Activated CD4-positive, alpha-beta memory T cell treated with anti-CD3 and anti-CD28 coated beads for 36 hours (primary cell): ENCODE measurements at regions of chr15 and their contacts with region 1.

Region 1: GRCh38 chr15:93087825-93088199 is 1.2 kb downstream of the RGMA start:
- DNase-seq: peak; percentile 83
- H3K4me3 Mint-ChIP-seq: peak overlapping the region; percentile 67
- H3K27ac Mint-ChIP-seq: no peak overlapping the region
- H3K4me1 Mint-ChIP-seq: peaks cover 12% of the 10 kb centered on the region
- H3K27me3 Mint-ChIP-seq: peaks cover 54% of the 10 kb centered on the region

Region 2: GRCh38 chr15:93072411-93073394 is 15.1 kb before region 1 on chr15:
- CTCF ChIA-PET with region 1: interaction called, 12 read pairs
- POLR2A ChIA-PET with region 1: no interaction called
- intact Hi-C with region 1: no loop called
- DNase-seq: no peak
- H3K4me3 Mint-ChIP-seq: no peak overlapping the region
- H3K27ac Mint-ChIP-seq: no peak overlapping the region
- H3K4me1 Mint-ChIP-seq: peaks cover 10% of the 10 kb centered on the region
- H3K27me3 Mint-ChIP-seq: peaks cover 42% of the 10 kb centered on the region

Region 3: GRCh38 chr15:93124126-93124525 is 36.3 kb after region 1 on chr15:
- CTCF ChIA-PET with region 1: no interaction called
- POLR2A ChIA-PET with region 1: no interaction called
- intact Hi-C with region 1: no loop called
- DNase-seq: no peak
- H3K4me3 Mint-ChIP-seq: no peak overlapping the region
- H3K27ac Mint-ChIP-seq: no peak overlapping the region
- H3K4me1 Mint-ChIP-seq: peaks cover 3% of the 10 kb centered on the region
- H3K27me3 Mint-ChIP-seq: no peaks in the 10 kb centered on the region

Region 4: GRCh38 chr15:93180656-93181055 is 92.8 kb after region 1 on chr15:
- CTCF ChIA-PET with region 1: no interaction called
- POLR2A ChIA-PET with region 1: no interaction called
- intact Hi-C with region 1: no loop called
- DNase-seq: no peak
- H3K4me3 Mint-ChIP-seq: no peak overlapping the region
- H3K27ac Mint-ChIP-seq: no peak overlapping the region
- H3K4me1 Mint-ChIP-seq: no peaks in the 10 kb centered on the region
- H3K27me3 Mint-ChIP-seq: peaks cover 2% of the 10 kb centered on the region

Region 5: DNA sequence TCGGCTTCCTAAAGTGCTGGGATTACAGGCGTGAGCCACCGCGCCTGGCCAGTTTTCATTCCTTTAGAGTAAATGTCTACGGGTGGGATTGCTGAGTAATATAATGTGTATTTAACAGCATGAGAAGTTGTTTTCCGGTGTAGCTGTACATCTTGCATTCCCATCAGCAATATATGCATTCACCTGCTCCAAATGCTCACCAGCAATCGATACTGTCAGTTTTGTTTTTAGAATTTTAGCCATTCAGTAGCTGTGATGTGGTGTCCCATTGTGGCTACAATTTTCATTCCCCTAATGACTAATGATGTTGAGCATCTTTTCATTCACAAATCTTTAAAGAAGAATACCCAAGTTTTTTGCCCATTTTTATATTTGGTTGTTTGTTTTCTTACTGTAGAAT is 136.0 kb after region 1 on chr15:
- CTCF ChIA-PET with region 1: interaction called, 9 read pairs
- POLR2A ChIA-PET with region 1: no interaction called
- intact Hi-C with region 1: loop called (anchors 10 kb)
- DNase-seq: no peak
- H3K4me3 Mint-ChIP-seq: no peak overlapping the region
- H3K27ac Mint-ChIP-seq: no peak overlapping the region
- H3K4me1 Mint-ChIP-seq: peaks cover 4% of the 10 kb centered on the region
- H3K27me3 Mint-ChIP-seq: peaks cover 16% of the 10 kb centered on the region

Region 6: DNA sequence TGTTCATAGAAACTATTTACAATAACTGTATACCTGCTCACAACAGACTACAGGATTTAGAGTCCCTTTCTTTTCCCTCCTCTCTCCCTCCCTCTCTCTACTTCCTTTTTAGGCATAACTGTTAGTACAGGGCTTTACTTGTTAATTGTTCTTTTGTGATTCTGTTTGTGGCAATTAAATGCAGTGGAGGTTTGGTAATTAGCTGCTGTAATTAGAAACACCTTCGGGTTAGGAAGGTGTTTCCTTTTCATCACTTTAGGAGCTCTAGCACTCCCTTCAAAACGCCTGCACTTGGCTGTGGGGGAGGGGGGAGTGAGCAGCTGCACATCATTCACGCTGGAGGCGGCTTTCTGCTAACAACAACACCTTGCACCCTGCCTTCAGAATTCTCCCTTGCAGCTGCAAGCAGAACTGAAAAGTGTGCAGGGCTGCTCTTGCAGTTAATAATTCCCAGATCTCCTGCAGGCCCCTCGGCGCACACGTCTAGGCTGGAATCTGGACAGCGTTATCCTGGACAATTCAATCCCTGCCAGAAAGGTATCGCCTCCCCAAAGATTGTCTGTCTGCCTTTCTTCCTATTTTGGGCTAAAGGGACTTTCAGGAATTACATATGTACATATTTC is 243.8 kb after region 1 on chr15:
- CTCF ChIA-PET with region 1: interaction called, 13 read pairs
- POLR2A ChIA-PET with region 1: no interaction called
- intact Hi-C with region 1: loop called (anchors 10 kb)
- DNase-seq: no peak
- H3K4me3 Mint-ChIP-seq: no peak overlapping the region
- H3K27ac Mint-ChIP-seq: no peak overlapping the region
- H3K4me1 Mint-ChIP-seq: no peaks in the 10 kb centered on the region
- H3K27me3 Mint-ChIP-seq: peaks cover 21% of the 10 kb centered on the region

Region 7: GRCh38 chr15:93562395-93563123 is 474.7 kb after region 1 on chr15:
- CTCF ChIA-PET with region 1: no interaction called
- POLR2A ChIA-PET with region 1: no interaction called
- intact Hi-C with region 1: no loop called
- DNase-seq: no peak
- H3K4me3 Mint-ChIP-seq: no peak overlapping the region
- H3K27ac Mint-ChIP-seq: no peak overlapping the region
- H3K4me1 Mint-ChIP-seq: no peaks in the 10 kb centered on the region
- H3K27me3 Mint-ChIP-seq: peaks cover 2% of the 10 kb centered on the region

Region 8: DNA sequence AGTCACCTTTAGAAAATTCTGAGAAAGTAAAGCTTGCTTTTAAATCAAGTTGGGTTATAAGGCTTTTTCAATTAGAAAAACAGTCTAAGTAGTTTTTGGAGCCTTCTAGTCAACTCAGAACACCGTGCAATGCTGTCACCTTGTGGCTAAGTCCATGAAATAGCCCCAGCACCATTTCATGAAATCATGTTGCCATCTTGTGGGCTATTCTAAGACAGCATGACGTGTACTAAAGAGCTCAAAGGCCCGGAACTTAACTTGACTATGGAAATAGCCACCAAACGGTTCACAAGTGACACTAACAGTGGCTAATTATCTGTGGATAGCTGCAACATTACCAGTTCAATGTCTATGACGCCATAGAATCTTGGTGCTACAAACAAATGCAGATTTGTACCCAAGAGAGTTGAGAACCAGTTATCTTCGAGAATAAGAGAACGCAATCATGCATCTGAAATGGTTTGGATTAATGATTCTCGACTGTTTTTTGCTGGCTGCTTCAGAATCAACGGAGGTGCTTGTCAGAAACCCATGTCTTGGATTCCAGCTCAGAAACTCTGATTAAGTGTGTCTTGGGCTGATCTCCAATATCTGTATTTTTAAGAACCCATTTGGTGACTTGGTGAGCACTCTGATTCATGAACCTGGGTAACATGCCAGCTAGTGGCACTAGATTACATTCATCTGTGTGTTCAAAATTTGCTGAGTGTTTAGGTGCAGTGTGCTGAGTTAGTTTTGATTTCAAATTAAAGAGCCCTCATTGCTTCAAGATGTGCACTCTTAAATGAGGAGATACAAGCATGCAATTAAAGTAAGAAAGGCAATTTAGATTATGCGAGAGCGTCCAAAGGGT is 1032.3 kb after region 1 on chr15:
- CTCF ChIA-PET with region 1: interaction called, 25 read pairs
- POLR2A ChIA-PET with region 1: no interaction called
- intact Hi-C with region 1: no loop called
- DNase-seq: peak; percentile 65
- H3K4me3 Mint-ChIP-seq: no peak overlapping the region
- H3K27ac Mint-ChIP-seq: no peak overlapping the region
- H3K4me1 Mint-ChIP-seq: no peaks in the 10 kb centered on the region
- H3K27me3 Mint-ChIP-seq: no peaks in the 10 kb centered on the region